Aorta (tissue), 5 donors: ENCODE measurements at regions of chr22 and their contacts with region 1.

Region 1: GRCh38 chr22:45163451-45164269 is at the start of gene NUP50:
- DNase-seq: peak; percentile 96 to 98
- ATAC-seq: peak; percentile 96
- H3K4me3 ChIP-seq: peak within 1 kb of the TSS; percentile 93 to 99
- H3K27ac ChIP-seq: peak within 1 kb of the TSS in 1 of 2 donors; percentile 1
- H3K4me1 ChIP-seq: peaks cover 0 to 2% of the 10 kb centered on the region in 2 donors
- H3K27me3 ChIP-seq: no peaks in the 10 kb centered on the region
- total RNA-seq, gene NUP50: 33.2 to 49.7 TPM

Region 2: DNA sequence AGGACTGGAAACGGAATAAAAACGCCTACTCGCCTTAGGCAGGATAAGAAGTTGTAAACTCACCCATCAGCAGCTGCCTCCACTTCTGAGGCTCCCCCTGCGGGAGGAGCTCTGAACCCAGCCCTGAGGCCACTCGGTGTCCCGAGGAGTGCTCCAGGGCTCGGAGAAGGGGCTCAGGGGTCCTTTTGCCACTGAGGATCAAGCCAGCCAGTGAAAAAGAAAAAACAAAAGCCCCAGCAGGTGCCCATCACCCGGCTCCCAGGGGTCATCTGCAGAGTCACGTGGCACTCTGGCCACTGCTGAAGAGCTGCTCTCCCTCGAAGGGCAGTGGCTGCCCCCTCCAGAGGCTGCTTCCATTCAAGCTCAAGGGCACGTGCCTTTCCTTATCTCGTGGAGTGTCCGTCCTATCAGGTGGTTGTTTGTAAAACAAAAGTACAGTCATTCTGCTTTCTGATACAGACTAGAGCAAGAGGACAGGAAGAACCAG is 29.1 kb after region 1 on chr22:
- intact Hi-C with region 1: no loop called
- DNase-seq: peak in 1 of 2 donors; percentile 42
- ATAC-seq: no peak
- H3K4me3 ChIP-seq: no peak overlapping the region
- H3K27ac ChIP-seq: no peak overlapping the region
- H3K4me1 ChIP-seq: no peaks in the 10 kb centered on the region
- H3K27me3 ChIP-seq: no peaks in the 10 kb centered on the region

Region 3: GRCh38 chr22:45210991-45211390 is 47.3 kb after region 1 on chr22:
- intact Hi-C with region 1: loop called in 1 of 2 experiments (anchors 2 kb)
- DNase-seq: peak in 1 of 2 donors; percentile 48
- ATAC-seq: no peak
- H3K4me3 ChIP-seq: no peak overlapping the region
- H3K27ac ChIP-seq: no peak overlapping the region
- H3K4me1 ChIP-seq: no peaks in the 10 kb centered on the region
- H3K27me3 ChIP-seq: no peaks in the 10 kb centered on the region

Region 4: GRCh38 chr22:45263463-45264269 is 100.0 kb after region 1 on chr22:
- intact Hi-C with region 1: loop called in 1 of 2 experiments (anchors 5 kb)
- DNase-seq: peak; percentile 85 to 87
- ATAC-seq: peak; percentile 91
- H3K4me3 ChIP-seq: no peak overlapping the region
- H3K27ac ChIP-seq: no peak overlapping the region
- H3K4me1 ChIP-seq: no peaks in the 10 kb centered on the region
- H3K27me3 ChIP-seq: no peaks in the 10 kb centered on the region